Ovary (tissue), 10 donors: ENCODE measurements at regions of chr11 and their contacts with region 1.

Region 1: DNA sequence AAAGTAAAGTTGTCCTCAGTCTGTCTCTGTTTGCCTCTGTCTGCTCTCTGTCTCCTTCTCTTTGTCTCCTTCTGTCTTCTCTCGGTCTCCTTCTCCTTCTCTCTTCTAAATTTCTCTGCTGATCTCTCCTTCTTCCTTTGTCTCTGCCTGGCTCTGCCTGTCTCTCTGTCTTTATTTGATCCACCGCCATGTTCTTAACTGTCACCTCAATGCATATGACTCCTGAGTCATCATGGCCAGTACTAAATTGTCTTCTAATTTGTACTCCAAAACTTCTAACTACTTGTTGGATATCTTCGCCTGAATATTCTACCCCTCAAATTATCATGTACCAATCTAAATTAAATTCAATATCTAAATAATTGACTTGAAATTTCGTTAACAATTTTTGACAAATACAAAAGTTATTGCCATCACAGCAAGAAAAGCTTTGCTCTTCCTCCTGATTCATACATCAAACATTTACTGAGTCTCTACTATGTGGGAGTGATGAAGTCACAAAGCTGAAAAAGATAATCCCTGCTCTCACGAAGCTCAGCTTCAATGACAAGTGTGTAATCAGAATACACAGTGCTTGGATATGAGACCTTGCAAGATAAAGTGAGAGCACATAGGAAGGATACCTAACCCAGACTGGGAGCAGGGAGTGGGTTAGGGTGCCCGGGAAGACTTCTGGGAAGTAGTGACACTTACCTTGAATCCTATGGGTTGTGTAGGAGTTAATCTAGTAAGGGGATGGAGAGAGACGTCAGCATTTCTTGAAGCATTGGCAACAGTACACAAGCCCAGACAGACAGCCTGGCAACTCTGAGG is 193.0 kb downstream of the MAML2 start:
- DNase-seq: no peak
- H3K4me3 ChIP-seq: no peak overlapping the region
- H3K27ac ChIP-seq: no peak overlapping the region
- H3K4me1 ChIP-seq: peaks cover 4% of the 10 kb centered on the region
- H3K27me3 ChIP-seq: no peaks in the 10 kb centered on the region
- CTCF ChIP-seq: no peak
- EP300 ChIP-seq: no peak
- POLR2A ChIP-seq: no peak

Region 2: GRCh38 chr11:96075532-96075959 is 74.4 kb before region 1 on chr11:
- intact Hi-C with region 1: loop called in 1 of 4 experiments (anchors 10 kb)
- DNase-seq: no peak
- H3K4me3 ChIP-seq: no peak overlapping the region
- H3K27ac ChIP-seq: no peak overlapping the region
- H3K4me1 ChIP-seq: no peaks in the 10 kb centered on the region
- H3K27me3 ChIP-seq: no peaks in the 10 kb centered on the region
- CTCF ChIP-seq: no peak
- EP300 ChIP-seq: no peak
- POLR2A ChIP-seq: no peak